Activated CD4-positive, alpha-beta memory T cell treated with anti-CD3 and anti-CD28 coated beads for 36 hours (primary cell): ENCODE measurements at regions of chr9 and their contacts with region 1.

Region 1: GRCh38 chr9:124537926-124538325 is 30.7 kb upstream of the NR5A1 start:
- DNase-seq: no peak
- H3K4me3 Mint-ChIP-seq: no peak overlapping the region
- H3K27ac Mint-ChIP-seq: no peak overlapping the region
- H3K4me1 Mint-ChIP-seq: no peaks in the 10 kb centered on the region
- H3K27me3 Mint-ChIP-seq: no peaks in the 10 kb centered on the region

Region 2: DNA sequence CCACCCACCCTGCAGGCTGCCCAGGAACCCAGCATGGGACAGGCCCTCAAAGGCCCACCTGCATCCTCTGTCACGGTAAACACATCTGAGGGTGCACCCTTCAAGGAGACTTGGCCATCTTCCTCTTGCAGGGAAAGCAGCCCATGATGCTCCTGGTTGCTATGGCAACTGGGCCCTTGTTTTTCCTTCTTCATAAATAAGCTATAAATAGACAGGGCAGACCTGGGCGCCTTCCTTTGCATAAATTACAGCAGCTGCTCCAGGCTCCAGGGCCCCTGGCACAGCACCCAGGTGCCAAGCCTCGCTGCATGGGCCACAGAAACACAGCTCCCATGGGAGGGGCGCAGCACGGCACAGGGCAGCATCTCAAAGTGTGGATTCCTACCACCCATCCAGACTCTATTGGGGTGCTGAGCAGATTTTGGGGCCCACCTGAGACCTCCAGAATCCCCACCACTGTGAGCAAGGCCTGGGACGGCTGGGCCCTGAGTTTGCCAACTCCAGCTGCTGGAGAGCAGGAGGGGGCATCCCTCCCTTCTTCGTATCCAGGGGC is 116.9 kb before region 1 on chr9:
- CTCF ChIA-PET with region 1: interaction called, 59 read pairs
- POLR2A ChIA-PET with region 1: no interaction called
- intact Hi-C with region 1: loop called (anchors 1 kb)
- DNase-seq: no peak
- H3K4me3 Mint-ChIP-seq: no peak overlapping the region
- H3K27ac Mint-ChIP-seq: no peak overlapping the region
- H3K4me1 Mint-ChIP-seq: peaks cover 2% of the 10 kb centered on the region
- H3K27me3 Mint-ChIP-seq: no peaks in the 10 kb centered on the region

Region 3: DNA sequence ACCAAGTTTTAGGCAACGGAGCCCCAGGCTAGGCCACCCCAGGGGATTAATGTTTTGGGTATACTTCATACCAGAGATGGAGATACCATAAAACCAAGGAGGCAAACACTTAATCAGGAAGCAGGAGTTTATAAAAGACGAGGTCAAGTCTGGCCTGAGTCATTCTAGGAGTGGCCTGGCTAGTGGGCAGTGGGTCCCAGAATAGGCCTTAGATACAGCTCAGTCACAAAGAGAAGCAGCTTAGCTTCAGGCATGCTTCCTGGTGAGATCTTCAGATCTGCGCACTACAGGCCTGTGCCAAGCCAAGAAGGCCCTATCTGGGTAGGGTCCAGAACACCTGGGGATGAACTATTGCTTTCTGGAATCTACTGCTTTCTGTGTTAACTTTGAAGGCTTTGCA is 10.1 kb before region 1 on chr9:
- CTCF ChIA-PET with region 1: interaction called, 14 read pairs
- POLR2A ChIA-PET with region 1: no interaction called
- intact Hi-C with region 1: no loop called
- DNase-seq: no peak
- H3K4me3 Mint-ChIP-seq: no peak overlapping the region
- H3K27ac Mint-ChIP-seq: no peak overlapping the region
- H3K4me1 Mint-ChIP-seq: no peaks in the 10 kb centered on the region
- H3K27me3 Mint-ChIP-seq: no peaks in the 10 kb centered on the region

Region 4: DNA sequence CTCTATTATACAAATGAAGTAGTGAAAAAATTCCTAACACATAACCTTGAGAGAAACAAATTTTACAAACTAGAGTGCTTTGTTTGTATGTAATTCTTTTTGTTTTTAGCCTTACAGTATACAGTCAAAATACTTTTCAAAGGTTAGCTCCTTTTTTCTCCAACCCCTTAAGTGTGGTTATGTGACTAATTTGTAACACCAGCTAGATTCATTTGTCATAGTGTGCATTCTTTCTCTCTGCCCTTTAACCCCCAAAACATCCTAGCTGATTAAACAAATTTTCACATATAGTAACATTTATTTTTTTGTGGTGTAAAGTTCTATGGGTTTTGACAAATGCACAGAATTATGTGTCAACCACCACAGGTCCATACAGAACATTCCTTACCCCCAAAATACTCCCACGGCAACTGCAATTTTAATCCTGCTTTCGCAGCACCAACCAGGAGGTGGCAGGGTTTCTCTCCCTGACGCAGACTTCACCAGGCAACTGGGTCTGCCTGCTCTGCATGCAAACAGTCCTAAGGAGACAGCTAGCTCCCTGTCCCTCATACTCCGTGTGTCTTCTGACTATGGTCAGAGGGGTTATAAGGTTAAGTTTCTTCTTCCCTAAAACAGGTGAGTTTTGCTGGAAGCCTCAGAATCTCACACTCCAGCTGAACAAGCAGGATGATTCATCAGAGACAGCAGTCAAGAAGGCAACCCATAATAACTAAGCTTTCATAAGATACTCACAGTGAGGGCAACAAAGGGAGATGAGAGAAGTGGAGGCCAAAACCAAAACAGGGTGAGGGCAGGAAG is 13.7 kb after region 1 on chr9:
- CTCF ChIA-PET with region 1: interaction called, 13 read pairs
- POLR2A ChIA-PET with region 1: no interaction called
- intact Hi-C with region 1: no loop called
- DNase-seq: peak; percentile 47
- H3K4me3 Mint-ChIP-seq: no peak overlapping the region
- H3K27ac Mint-ChIP-seq: no peak overlapping the region
- H3K4me1 Mint-ChIP-seq: no peaks in the 10 kb centered on the region
- H3K27me3 Mint-ChIP-seq: peaks cover 11% of the 10 kb centered on the region

Region 5: GRCh38 chr9:124696101-124696500 is 158.2 kb after region 1 on chr9:
- CTCF ChIA-PET with region 1: no interaction called
- POLR2A ChIA-PET with region 1: no interaction called
- intact Hi-C with region 1: no loop called
- DNase-seq: no peak
- H3K4me3 Mint-ChIP-seq: no peak overlapping the region
- H3K27ac Mint-ChIP-seq: no peak overlapping the region
- H3K4me1 Mint-ChIP-seq: no peaks in the 10 kb centered on the region
- H3K27me3 Mint-ChIP-seq: no peaks in the 10 kb centered on the region